Heart right ventricle (tissue), 16 donors: ENCODE measurements at regions of chr1 and their contacts with region 1.

Region 1: DNA sequence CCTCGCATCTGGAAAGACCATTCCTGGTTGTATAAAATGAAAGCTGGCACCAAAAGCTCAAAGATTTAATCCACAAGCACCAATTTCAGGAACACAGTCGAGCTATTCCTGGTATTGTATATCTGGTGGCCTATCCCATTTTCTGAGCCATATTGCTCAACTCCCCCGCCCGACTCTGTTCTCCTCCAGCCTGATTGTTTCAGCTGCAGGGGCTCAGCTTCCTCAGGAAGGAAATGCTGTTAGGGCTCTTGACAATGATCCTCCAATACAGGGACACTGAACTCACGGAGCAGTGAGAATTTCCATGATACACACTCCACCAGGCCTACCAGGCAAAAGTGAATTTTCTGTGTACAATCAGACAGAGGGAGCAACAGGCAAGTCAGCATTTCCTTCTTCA is 16.9 kb upstream of the TDRD10 start:
- DNase-seq: peak in 1 of 2 donors; percentile 88
- ATAC-seq: peak; percentile 85 to 94 (median 92)
- H3K4me3 ChIP-seq: no peak overlapping the region
- H3K27ac ChIP-seq: peak overlapping the region in 9 of 10 donors; percentile 7 to 95 (median 79)
- H3K4me1 ChIP-seq: peaks cover 6 to 82% (median 64%) of the 10 kb centered on the region in 9 donors
- H3K27me3 ChIP-seq: no peaks in the 10 kb centered on the region
- CTCF ChIP-seq: peak in 2 of 9 donors; percentile 27 to 33

Region 2: DNA sequence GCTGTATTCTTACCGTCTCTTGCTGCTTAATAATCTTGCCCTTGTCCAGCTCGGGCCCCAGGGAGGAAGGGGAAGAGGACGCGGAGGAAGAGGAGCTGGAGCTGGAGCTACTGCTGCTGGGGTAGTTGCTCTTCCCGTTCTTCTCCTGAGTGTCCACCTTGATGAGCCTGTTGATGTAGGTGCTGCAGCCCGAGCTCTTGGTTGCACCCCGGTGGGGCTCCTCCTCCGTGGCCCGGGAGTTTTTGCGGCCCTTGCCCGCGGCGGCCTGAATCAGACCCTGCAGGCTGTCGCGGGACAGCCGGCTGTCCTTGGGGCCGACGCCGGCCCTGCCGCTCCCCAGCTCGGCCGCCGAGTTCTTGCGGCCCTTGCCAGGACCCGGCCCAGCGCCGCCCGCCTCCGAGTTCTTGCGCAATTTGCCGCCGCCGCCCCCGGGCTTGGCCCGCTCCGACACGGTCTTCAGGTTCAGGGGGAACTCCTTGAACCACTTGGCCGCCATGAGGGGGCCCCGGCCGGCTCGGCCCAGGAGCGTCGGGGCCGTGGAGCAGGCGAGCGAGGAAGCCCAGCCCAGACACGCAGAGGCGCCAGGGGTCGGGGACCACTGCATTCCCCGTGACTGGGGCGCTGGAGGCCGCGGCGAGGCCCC is 16.4 kb after region 1 on chr1:
- intact Hi-C with region 1: loop called in 2 of 10 experiments (anchors 1 to 2 kb)
- DNase-seq: peak; percentile 36 to 74
- ATAC-seq: peak; percentile 25 to 79 (median 62)
- H3K4me3 ChIP-seq: peak overlapping the region; percentile 48 to 79 (median 67)
- H3K27ac ChIP-seq: peak overlapping the region; percentile 76 to 95 (median 89)
- H3K4me1 ChIP-seq: peaks cover 3 to 41% (median 19%) of the 10 kb centered on the region in 9 donors
- H3K27me3 ChIP-seq: peaks cover 0 to 64% (median 27%) of the 10 kb centered on the region in 7 donors
- CTCF ChIP-seq: peak in 1 of 9 donors; percentile 12